H1 (cell line): ENCODE measurements at regions of chr1 and their contacts with region 1.

Region 1: DNA sequence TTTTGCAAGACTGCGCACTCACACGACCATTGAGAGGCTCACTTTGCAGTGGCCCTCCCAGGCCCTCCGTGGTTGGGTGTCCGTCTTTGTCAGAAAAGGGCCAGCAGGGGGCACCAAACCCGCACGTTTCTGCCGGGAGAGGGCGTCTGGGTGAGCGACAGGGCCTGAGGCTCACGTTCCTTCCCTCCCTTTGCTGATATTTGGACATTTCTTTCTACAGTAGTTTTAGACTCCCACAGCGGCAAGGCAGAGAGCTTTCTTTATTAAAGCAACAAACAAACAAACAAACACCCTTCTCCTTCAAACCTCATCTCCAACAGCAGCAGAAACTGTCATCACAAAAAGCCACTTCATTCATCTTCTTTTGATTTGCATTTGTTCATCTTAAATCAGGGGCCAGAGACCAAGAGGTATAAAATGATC is 79.2 kb upstream of the WDR26 start:
- DNase-seq: peak in 1 of 2 experiments; percentile 98
- H3K4me3 ChIP-seq: no peak overlapping the region
- H3K27ac ChIP-seq: no peak overlapping the region
- H3K4me1 ChIP-seq: peaks cover 0 to 2% (median 0%) of the 10 kb centered on the region in 4 experiments; a peak in 2 of 7 replicates
- H3K27me3 ChIP-seq: no peaks in the 10 kb centered on the region
- CTCF ChIP-seq: peak; percentile 84 to 99 (median 96)
- EP300 ChIP-seq: no peak
- POLR2A ChIP-seq: no peak
- RAD21 ChIP-seq: peak; percentile 97 to 98

Region 2: DNA sequence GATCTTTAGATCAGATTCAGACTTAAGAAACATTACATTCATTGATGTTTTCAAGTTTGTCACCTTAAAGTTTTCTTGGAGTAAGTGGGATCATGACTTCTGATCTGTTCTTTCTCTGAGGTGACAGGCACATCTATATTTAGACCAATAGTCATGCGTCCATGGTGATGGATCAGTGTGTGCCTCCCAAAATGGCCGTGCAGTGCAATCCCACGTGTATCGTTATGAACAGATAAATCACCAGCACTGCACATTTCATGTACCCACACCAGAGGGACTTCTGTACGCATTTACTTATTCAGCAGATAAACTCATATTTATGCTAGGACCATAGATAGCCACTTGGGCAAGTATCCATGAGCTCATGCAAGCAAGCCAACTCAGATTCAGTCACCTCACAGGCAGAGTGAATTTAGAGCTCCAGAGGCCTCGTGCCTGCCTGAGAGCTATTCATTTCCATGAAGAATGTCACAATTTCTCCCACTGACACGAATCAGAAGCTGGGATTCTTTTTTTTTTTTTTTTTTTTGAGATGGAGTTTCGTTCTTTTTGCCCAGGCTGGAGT is 65.3 kb before region 1 on chr1:
- CTCF ChIA-PET with region 1: no interaction called
- POLR2A ChIA-PET with region 1: no interaction called
- DNase-seq: no peak
- H3K4me3 ChIP-seq: no peak overlapping the region
- H3K27ac ChIP-seq: no peak overlapping the region
- H3K4me1 ChIP-seq: no peaks in the 10 kb centered on the region
- H3K27me3 ChIP-seq: no peaks in the 10 kb centered on the region
- CTCF ChIP-seq: no peak
- EP300 ChIP-seq: no peak
- POLR2A ChIP-seq: no peak
- RAD21 ChIP-seq: no peak

Region 3: GRCh38 chr1:224528900-224529299 is 15.1 kb after region 1 on chr1:
- CTCF ChIA-PET with region 1: interaction called, 41 read pairs
- POLR2A ChIA-PET with region 1: no interaction called
- DNase-seq: no peak
- H3K4me3 ChIP-seq: no peak overlapping the region
- H3K27ac ChIP-seq: no peak overlapping the region
- H3K4me1 ChIP-seq: peaks cover 0 to 4% (median 2%) of the 10 kb centered on the region in 4 experiments; a peak in 2 of 7 replicates
- H3K27me3 ChIP-seq: no peaks in the 10 kb centered on the region
- CTCF ChIP-seq: no peak
- EP300 ChIP-seq: no peak
- POLR2A ChIP-seq: no peak
- RAD21 ChIP-seq: no peak

Region 4: GRCh38 chr1:224615861-224616755 is 102.3 kb after region 1 on chr1 and contains the start of gene CNIH3:
- CTCF ChIA-PET with region 1: interaction called, 13 read pairs
- POLR2A ChIA-PET with region 1: no interaction called
- DNase-seq: peak; percentile 53 to 89
- H3K4me3 ChIP-seq: peak within 1 kb of the TSS; percentile 25 to 65 (median 54)
- H3K27ac ChIP-seq: no peak within 1 kb of the TSS
- H3K4me1 ChIP-seq: peaks cover 0 to 15% (median 11%) of the 10 kb centered on the region in 4 experiments; a peak in 6 of 7 replicates
- H3K27me3 ChIP-seq: peaks cover 39 to 67% (median 55%) of the 10 kb centered on the region in 4 experiments
- CTCF ChIP-seq: no peak
- EP300 ChIP-seq: peak in 1 of 2 experiments; percentile 2; a peak in 1 of 3 replicates
- POLR2A ChIP-seq: no peak; a peak in 2 of 3 replicates
- RAD21 ChIP-seq: peak; percentile 6 to 24; a peak in 2 of 4 replicates
- total RNA-seq, gene CNIH3: 4.4 and 5.6 TPM in 2 replicates

Region 5: DNA sequence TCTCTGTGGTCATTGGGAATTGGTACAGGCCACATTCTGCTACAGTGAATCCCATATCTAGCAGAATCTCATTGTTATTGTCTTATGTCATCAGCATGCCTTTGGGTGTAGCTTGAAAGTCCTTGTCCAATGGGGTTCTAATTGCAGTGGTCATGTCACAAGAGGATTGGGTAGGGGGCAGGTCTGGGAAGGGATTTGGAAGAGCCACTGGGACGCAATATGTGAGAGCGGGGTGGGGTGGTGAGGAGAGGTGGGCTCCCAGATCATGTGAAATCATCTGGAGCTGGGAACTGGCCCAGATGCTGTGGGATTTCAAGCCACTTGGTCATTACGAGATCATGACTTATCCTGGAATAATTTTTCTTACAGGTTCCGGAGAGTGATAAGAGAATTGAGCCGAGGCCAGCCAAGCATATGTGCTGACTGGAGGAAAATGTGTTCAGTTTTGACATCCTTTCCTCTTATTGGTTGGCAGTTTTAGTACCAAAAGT is 118.6 kb after region 1 on chr1:
- CTCF ChIA-PET with region 1: interaction called, 144 read pairs
- POLR2A ChIA-PET with region 1: no interaction called
- DNase-seq: no peak
- H3K4me3 ChIP-seq: no peak overlapping the region
- H3K27ac ChIP-seq: no peak overlapping the region
- H3K4me1 ChIP-seq: peaks cover 0 to 9% (median 5%) of the 10 kb centered on the region in 4 experiments; a peak in 5 of 7 replicates
- H3K27me3 ChIP-seq: no peaks in the 10 kb centered on the region
- CTCF ChIP-seq: no peak
- EP300 ChIP-seq: no peak
- POLR2A ChIP-seq: no peak
- RAD21 ChIP-seq: no peak

Region 6: DNA sequence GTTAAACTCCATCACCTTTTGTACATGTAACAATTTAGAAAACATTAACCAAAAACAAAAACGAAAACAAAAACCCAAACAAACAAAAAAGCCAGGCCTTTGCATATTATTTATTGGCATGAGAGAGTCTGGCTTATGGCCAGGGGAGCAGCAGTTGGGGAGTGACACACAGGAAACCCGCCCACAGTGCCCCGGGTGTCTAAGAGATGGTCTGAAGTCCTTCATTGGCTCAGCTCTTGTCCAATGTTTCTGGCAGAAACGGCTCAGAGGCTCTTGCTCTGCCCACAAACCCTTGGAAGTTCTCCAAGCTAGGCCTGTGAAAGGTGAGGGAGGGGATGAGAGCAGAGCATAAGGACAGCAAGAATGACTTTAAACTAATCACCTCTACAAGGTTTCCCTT is 233.8 kb after region 1 on chr1:
- CTCF ChIA-PET with region 1: no interaction called
- POLR2A ChIA-PET with region 1: no interaction called
- DNase-seq: no peak
- H3K4me3 ChIP-seq: no peak overlapping the region
- H3K27ac ChIP-seq: no peak overlapping the region
- H3K4me1 ChIP-seq: no peaks in the 10 kb centered on the region
- H3K27me3 ChIP-seq: no peaks in the 10 kb centered on the region
- CTCF ChIP-seq: no peak
- EP300 ChIP-seq: no peak
- POLR2A ChIP-seq: no peak
- RAD21 ChIP-seq: no peak

Region 7: GRCh38 chr1:224922404-224923164 is 408.8 kb after region 1 on chr1:
- CTCF ChIA-PET with region 1: interaction called, 78 read pairs
- POLR2A ChIA-PET with region 1: no interaction called
- DNase-seq: peak in 1 of 2 experiments; percentile 54
- H3K4me3 ChIP-seq: no peak overlapping the region
- H3K27ac ChIP-seq: no peak overlapping the region
- H3K4me1 ChIP-seq: 0 out of 7 replicates have a peak, but pooled peaks cover 0 to 2% (median 0%) of the 10 kb centered on the region in 4 experiments
- H3K27me3 ChIP-seq: no peaks in the 10 kb centered on the region
- CTCF ChIP-seq: peak in 2 of 3 experiments; percentile 61 to 79; a peak in 3 of 4 replicates
- EP300 ChIP-seq: no peak
- POLR2A ChIP-seq: no peak
- RAD21 ChIP-seq: peak; percentile 91 to 93